Gastrocnemius medialis (tissue), 4 donors: ENCODE measurements at regions of chr18 and their contacts with region 1.

Region 1: DNA sequence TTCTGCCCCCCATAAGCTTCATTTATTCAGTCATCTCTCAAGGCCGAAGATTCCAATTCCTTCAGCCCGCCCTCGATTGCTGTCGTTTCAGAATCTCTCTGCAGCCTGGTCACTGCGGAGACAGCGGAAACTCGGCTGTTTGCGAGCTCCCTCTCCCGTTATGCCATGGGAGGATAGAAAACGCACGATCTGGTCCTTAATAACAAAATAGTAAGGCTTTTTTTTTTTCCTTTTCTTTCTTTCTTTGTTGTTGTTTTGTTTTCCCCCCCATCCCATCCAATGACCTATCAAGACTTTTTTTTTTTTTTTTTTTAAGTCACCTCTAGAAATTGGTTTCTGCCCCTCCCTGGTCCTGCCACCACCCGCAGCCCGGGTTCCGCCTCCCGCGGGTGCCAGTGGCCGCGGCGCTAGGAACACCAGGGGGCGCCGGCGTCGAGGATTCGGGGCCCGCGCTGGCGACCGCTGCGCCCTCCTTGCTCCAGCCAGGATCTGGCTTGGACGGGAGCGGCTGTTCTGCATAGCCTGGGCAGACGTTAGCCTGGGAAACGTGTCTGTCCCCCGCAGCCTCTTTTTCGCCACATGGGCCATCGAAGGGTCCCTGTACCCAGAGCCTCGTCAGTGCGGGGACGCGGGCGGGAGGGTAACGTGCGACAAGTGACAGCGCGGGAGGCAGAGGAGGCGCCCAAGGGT is 10.1 kb downstream of the CPLX4 start:
- DNase-seq: peak; percentile 36 to 58
- ATAC-seq: peak; percentile 92 to 97
- H3K4me3 ChIP-seq: peak overlapping the region; percentile 13 to 57 (median 42)
- H3K27ac ChIP-seq: no peak overlapping the region
- H3K4me1 ChIP-seq: no peaks in the 10 kb centered on the region
- H3K27me3 ChIP-seq: peaks cover 0 to 6% (median 3%) of the 10 kb centered on the region in 3 donors
- CTCF ChIP-seq: peak; percentile 60 to 82 (median 79)
- POLR2A ChIP-seq: no peak

Region 2: GRCh38 chr18:59393381-59393780 is 85.0 kb after region 1 on chr18:
- in situ Hi-C with region 1: no loop called
- intact Hi-C with region 1: no loop called
- DNase-seq: no peak
- ATAC-seq: no peak
- H3K4me3 ChIP-seq: no peak overlapping the region
- H3K27ac ChIP-seq: no peak overlapping the region
- H3K4me1 ChIP-seq: peaks cover 19 to 22% of the 10 kb centered on the region in 2 donors
- H3K27me3 ChIP-seq: no peaks in the 10 kb centered on the region
- CTCF ChIP-seq: no peak
- POLR2A ChIP-seq: no peak

Region 3: GRCh38 chr18:59419386-59419785 is 111.0 kb after region 1 on chr18:
- in situ Hi-C with region 1: loop called in 2 of 4 experiments (anchors 10 to 25 kb)
- intact Hi-C with region 1: no loop called
- DNase-seq: no peak
- ATAC-seq: peak in 1 of 2 donors; percentile 62
- H3K4me3 ChIP-seq: no peak overlapping the region
- H3K27ac ChIP-seq: no peak overlapping the region
- H3K4me1 ChIP-seq: no peaks in the 10 kb centered on the region
- H3K27me3 ChIP-seq: peaks cover 0 to 5% (median 3%) of the 10 kb centered on the region in 3 donors
- CTCF ChIP-seq: no peak
- POLR2A ChIP-seq: no peak